Sigmoid colon (tissue), 7 donors: ENCODE measurements at regions of chr1 and their contacts with region 1.

Region 1: DNA sequence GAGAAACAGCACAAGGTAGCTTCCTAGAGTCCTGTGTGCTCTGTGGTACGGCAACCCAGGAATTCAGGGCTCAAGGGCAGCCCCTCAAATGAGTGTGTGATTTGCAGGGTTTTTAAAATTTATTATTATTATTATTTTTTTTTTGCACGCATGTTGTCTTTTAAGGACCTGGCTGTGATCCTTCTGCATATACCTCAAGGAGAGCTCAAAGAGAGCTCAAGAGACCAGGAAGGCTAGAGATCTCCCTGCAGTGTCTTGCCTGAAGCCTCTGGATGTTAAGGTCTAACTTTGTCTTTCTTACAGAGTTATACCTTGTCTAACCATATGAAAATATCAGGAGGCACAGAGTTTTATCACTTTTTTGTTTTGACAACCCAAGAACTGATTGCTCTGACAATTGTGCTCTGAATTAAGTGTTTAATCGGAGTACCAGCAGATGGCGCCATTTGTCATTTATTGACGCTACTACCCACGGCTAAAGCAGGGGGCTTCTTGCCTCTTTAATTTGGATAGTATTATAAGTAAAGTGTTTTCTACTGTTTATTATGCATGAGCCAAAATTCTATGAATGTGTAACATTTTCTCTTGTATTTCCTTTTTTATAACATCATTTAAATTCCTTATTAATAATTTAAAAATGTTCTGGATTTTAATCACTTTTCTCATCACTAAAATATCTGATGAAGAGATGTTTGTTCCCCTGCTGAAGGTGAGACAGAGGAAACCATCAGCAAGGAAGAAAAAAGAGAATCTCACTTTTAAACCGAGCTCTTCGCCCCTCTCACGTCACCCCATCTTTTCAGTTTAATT is 35.8 kb upstream of the LMO4 start:
- DNase-seq: no peak
- H3K4me3 ChIP-seq: no peak overlapping the region
- H3K27ac ChIP-seq: no peak overlapping the region
- H3K4me1 ChIP-seq: no peaks in the 10 kb centered on the region
- H3K27me3 ChIP-seq: no peaks in the 10 kb centered on the region
- CTCF ChIP-seq: peak; percentile 49 to 82 (median 71)
- EP300 ChIP-seq: no peak
- POLR2A ChIP-seq: no peak

Region 2: GRCh38 chr1:87167848-87168525 is 124.9 kb before region 1 on chr1:
- intact Hi-C with region 1: no loop called
- DNase-seq: no peak
- H3K4me3 ChIP-seq: no peak overlapping the region
- H3K27ac ChIP-seq: no peak overlapping the region
- H3K4me1 ChIP-seq: peaks cover 0 to 5% (median 0%) of the 10 kb centered on the region in 4 donors
- H3K27me3 ChIP-seq: no peaks in the 10 kb centered on the region
- CTCF ChIP-seq: no peak
- EP300 ChIP-seq: no peak
- POLR2A ChIP-seq: no peak

Region 3: DNA sequence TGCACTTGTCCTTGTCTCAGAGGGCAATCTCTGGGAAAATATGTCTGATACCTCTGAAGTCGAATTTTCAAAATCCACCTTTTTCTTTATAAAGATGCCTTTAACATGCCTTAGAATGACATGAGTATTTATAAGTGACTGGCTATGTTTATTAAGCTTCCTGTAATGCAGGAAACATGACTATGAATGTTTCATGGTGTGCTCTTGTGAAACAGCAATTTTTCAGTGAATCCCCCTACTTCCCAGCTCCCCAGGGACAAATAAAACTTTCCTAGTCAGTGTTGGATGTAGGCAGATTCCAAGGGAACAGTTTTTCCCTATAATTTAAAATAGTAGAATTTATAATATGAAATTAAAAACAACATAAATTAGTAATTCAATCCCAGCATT is 472.8 kb after region 1 on chr1:
- intact Hi-C with region 1: no loop called
- DNase-seq: no peak
- H3K4me3 ChIP-seq: no peak overlapping the region
- H3K27ac ChIP-seq: no peak overlapping the region
- H3K4me1 ChIP-seq: no peaks in the 10 kb centered on the region
- H3K27me3 ChIP-seq: no peaks in the 10 kb centered on the region
- CTCF ChIP-seq: no peak
- EP300 ChIP-seq: no peak
- POLR2A ChIP-seq: no peak

Region 4: GRCh38 chr1:88061492-88062177 is 768.7 kb after region 1 on chr1:
- intact Hi-C with region 1: loop called (anchors 5 kb)
- DNase-seq: peak; percentile 72
- H3K4me3 ChIP-seq: no peak overlapping the region
- H3K27ac ChIP-seq: no peak overlapping the region
- H3K4me1 ChIP-seq: peaks cover 0 to 12% (median 6%) of the 10 kb centered on the region in 4 donors
- H3K27me3 ChIP-seq: no peaks in the 10 kb centered on the region
- CTCF ChIP-seq: peak; percentile 37 to 83 (median 76)
- EP300 ChIP-seq: no peak
- POLR2A ChIP-seq: no peak

Region 5: GRCh38 chr1:88302843-88303486 is 1010.1 kb after region 1 on chr1:
- intact Hi-C with region 1: loop called (anchors 5 kb)
- DNase-seq: no peak
- H3K4me3 ChIP-seq: no peak overlapping the region
- H3K27ac ChIP-seq: no peak overlapping the region
- H3K4me1 ChIP-seq: no peaks in the 10 kb centered on the region
- H3K27me3 ChIP-seq: no peaks in the 10 kb centered on the region
- CTCF ChIP-seq: peak in 3 of 4 experiments; percentile 10 to 46 (median 38)
- EP300 ChIP-seq: no peak
- POLR2A ChIP-seq: no peak